Right lobe of liver (tissue), 6 donors: ENCODE measurements at regions of chr11 and their contacts with region 1.

Region 1: DNA sequence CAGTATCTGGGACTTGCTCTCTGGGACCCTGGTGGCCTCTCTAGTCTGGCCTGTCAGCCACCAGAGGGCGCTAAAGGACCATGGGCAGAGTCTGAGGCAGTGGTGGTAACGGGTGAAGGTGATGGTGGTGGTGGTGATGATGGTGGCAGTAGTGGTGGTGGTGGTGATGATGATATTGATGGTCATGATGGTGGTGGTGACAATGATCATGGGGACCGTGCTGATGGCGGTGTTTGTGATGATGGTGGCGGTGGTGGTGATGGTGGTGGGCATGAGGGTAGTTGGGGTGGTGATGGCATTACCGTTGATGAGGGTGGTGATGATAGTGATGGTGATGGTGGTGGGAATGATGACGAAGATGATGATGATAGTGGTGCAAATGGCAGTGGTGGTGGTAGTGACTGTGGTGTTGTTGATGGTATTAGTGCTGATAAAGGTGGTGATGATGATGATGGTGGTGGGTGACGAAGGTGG is 16.0 kb downstream of the TRPM5 start:
- DNase-seq: peak; percentile 82 to 85 (median 84)
- ATAC-seq: peak; percentile 69 to 88 (median 80)
- H3K4me3 ChIP-seq: no peak overlapping the region
- H3K27ac ChIP-seq: no peak overlapping the region
- H3K4me1 ChIP-seq: no peaks in the 10 kb centered on the region
- H3K27me3 ChIP-seq: no peaks in the 10 kb centered on the region
- CTCF ChIP-seq: peak; percentile 67 to 85 (median 76)
- POLR2A ChIP-seq: no peak

Region 2: GRCh38 chr11:1876361-1877063 is 551.8 kb before region 1 on chr11:
- intact Hi-C with region 1: no loop called
- DNase-seq: peak; percentile 56 to 62 (median 60)
- ATAC-seq: peak in 3 of 4 donors; percentile 38 to 56 (median 49)
- H3K4me3 ChIP-seq: no peak overlapping the region
- H3K27ac ChIP-seq: no peak overlapping the region
- H3K4me1 ChIP-seq: no peaks in the 10 kb centered on the region
- H3K27me3 ChIP-seq: no peaks in the 10 kb centered on the region
- CTCF ChIP-seq: peak; percentile 41 to 53 (median 46)
- POLR2A ChIP-seq: no peak

Region 3: GRCh38 chr11:2532704-2533586 is 104.6 kb after region 1 on chr11:
- intact Hi-C with region 1: loop called (anchors 2 kb)
- DNase-seq: peak; percentile 90 to 93 (median 90)
- ATAC-seq: peak; percentile 86 to 93 (median 92)
- H3K4me3 ChIP-seq: no peak overlapping the region
- H3K27ac ChIP-seq: no peak overlapping the region
- H3K4me1 ChIP-seq: peaks cover 0 to 5% (median 0%) of the 10 kb centered on the region in 4 donors
- H3K27me3 ChIP-seq: no peaks in the 10 kb centered on the region
- CTCF ChIP-seq: peak; percentile 99 to 100 (median 99)
- POLR2A ChIP-seq: no peak

Region 4: GRCh38 chr11:2892215-2893020 is 464.1 kb after region 1 on chr11:
- intact Hi-C with region 1: loop called in 1 of 2 experiments (anchors 5 kb)
- DNase-seq: peak in 2 of 3 donors; percentile 67 to 73
- ATAC-seq: peak; percentile 39 to 57 (median 52)
- H3K4me3 ChIP-seq: peak overlapping the region; percentile 11 to 35 (median 15)
- H3K27ac ChIP-seq: peak overlapping the region; percentile 43 to 58 (median 45)
- H3K4me1 ChIP-seq: peaks cover 0 to 21% (median 9%) of the 10 kb centered on the region in 4 donors
- H3K27me3 ChIP-seq: no peaks in the 10 kb centered on the region
- CTCF ChIP-seq: peak; percentile 76 to 85 (median 81)
- POLR2A ChIP-seq: no peak